PC-9 (cell line): ENCODE measurements at regions of chr21 and their contacts with region 1.

Region 1: DNA sequence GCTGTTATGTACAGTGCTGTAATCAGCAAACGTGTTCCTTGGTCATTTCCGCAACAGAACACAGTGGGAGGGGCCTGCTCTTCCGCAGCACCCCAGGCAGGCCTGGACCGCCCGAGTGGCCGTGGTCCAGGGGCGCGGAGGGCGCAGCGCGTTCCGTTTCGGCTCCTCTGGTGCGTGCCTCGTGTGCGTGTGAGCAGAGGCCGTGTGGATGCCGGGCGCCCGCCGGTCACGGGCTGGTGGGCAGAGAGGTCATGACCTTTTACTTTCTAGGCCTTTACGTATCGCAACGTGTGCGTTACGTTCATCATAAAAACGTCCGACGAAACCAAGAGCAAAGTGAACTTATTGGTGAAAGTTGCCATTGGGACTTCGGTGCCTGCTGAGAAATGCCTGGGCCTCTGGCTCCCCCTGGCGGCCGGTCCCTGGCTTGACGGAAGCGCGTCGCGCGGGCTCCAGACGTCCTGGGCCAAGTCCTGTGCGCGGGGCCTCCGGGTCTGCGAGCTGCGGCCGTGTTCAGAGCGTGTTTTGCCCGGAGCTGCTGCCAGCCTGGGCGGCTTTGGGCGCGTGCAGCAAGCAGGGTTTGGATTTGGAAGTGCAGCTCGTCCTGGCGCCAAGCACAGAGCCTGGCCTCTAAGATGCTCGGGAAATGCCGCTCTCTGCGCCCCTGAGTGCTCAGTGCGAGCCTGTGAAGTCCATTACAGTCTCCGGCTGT is 34.4 kb downstream of the COL18A1 start:
- DNase-seq: peak in 1 of 2 experiments; percentile 67
- H3K4me3 ChIP-seq: no peak overlapping the region
- H3K27ac ChIP-seq: no peak overlapping the region
- H3K4me1 ChIP-seq: no peaks in the 10 kb centered on the region
- H3K27me3 ChIP-seq: no peaks in the 10 kb centered on the region
- CTCF ChIP-seq: peak; percentile 89

Region 2: GRCh38 chr21:45281411-45282282 is 157.7 kb before region 1 on chr21:
- CTCF ChIA-PET with region 1: interaction called, 14 read pairs
- POLR2A ChIA-PET with region 1: no interaction called
- intact Hi-C with region 1: no loop called
- DNase-seq: no peak
- H3K4me3 ChIP-seq: no peak overlapping the region
- H3K27ac ChIP-seq: no peak overlapping the region
- H3K4me1 ChIP-seq: no peaks in the 10 kb centered on the region
- H3K27me3 ChIP-seq: no peaks in the 10 kb centered on the region
- CTCF ChIP-seq: no peak

Region 3: GRCh38 chr21:45404730-45405270 is 34.5 kb before region 1 on chr21 and contains the start of gene COL18A1:
- CTCF ChIA-PET with region 1: no interaction called
- POLR2A ChIA-PET with region 1: no interaction called
- intact Hi-C with region 1: no loop called
- DNase-seq: peak in 1 of 2 experiments; percentile 67
- H3K4me3 ChIP-seq: peak within 1 kb of the TSS; percentile 58; the same call in 1 of the 2 replicates
- H3K27ac ChIP-seq: no peak within 1 kb of the TSS
- H3K4me1 ChIP-seq: peaks cover 51% of the 10 kb centered on the region
- H3K27me3 ChIP-seq: no peaks in the 10 kb centered on the region
- CTCF ChIP-seq: no peak
- total RNA-seq, gene COL18A1: 82.4 and 106 TPM in 2 replicates

Region 4: GRCh38 chr21:45596704-45597318 is 157.5 kb after region 1 on chr21:
- CTCF ChIA-PET with region 1: no interaction called
- POLR2A ChIA-PET with region 1: no interaction called
- intact Hi-C with region 1: loop called (anchors 10 kb)
- DNase-seq: peak in 1 of 2 experiments; percentile 61
- H3K4me3 ChIP-seq: no peak overlapping the region
- H3K27ac ChIP-seq: no peak overlapping the region
- H3K4me1 ChIP-seq: no peaks in the 10 kb centered on the region
- H3K27me3 ChIP-seq: peaks cover 40% of the 10 kb centered on the region
- CTCF ChIP-seq: peak; percentile 77